ENCODE measurements at regions of chr19 and their contacts with region 1.

Region 1: DNA sequence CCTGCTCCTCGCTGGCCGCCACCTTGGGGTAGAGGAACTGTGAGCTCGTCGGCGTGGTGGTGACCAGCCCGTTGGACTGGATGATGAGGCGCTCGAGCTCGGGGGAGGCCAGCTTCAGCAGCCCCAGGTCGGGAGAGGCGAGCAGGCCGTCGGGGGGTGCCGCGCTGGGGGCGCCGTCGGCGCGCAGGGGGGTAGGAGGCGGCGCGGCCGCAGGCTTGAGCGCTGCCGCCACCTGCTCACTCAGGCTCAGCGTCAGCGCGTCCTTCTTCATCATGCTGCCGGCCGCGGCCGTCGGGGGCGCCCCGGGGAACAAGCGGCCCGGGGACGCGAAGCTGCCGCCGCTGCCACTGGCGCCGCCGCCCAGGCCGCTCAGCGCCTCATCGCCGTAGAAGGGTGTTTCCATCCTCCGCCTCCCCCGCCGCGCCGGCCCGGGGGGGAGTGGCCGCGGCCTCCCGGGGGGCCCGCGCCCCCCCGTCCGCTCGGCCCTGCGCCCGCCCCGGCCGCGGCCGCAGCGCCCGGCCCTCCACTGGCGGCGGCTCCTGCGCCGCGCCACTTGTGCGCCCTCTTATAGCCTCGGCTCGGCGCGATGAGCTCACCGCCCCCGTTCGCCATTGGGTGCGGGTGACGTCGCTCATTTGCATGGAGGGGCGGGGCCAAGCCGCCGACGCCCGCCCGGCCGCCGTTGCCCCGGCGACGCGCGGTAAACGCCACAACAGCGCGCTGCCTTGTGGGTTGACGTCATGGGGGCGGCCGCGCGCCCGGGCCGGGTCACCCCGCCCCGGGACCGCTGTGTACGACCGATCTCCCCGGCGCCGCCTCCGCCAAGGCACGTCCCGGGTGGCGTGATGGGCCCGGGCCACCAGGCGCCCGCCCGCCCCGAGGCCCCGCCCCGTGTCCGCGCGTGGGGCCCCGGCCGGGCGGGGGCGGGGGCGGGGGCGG is at the start of gene JUND:
- DNase-seq: peak; percentile 98 to 99
- ATAC-seq: peak; percentile 77 to 88 (median 82)
- H3K4me3 ChIP-seq: peak within 1 kb of the TSS; percentile 75 to 100 (median 94)
- H3K27ac ChIP-seq: peak within 1 kb of the TSS; percentile 99 to 100 (median 100)
- H3K4me1 ChIP-seq: peaks cover 9 to 56% (median 45%) of the 10 kb centered on the region in 9 donors
- H3K27me3 ChIP-seq: no peaks in the 10 kb centered on the region
- CTCF ChIP-seq: peak in 1 of 9 donors; percentile 9
- total RNA-seq, gene JUND: 93.7 to 195 (median 133) TPM

Region 2: GRCh38 chr19:17968362-17968761 is 313.0 kb before region 1 on chr19:
- intact Hi-C with region 1: no loop called
- DNase-seq: no peak
- ATAC-seq: no peak
- H3K4me3 ChIP-seq: no peak overlapping the region
- H3K27ac ChIP-seq: no peak overlapping the region
- H3K4me1 ChIP-seq: peaks cover 0 to 5% (median 0%) of the 10 kb centered on the region in 9 donors
- H3K27me3 ChIP-seq: peaks cover 0 to 73% (median 57%) of the 10 kb centered on the region in 7 donors
- CTCF ChIP-seq: no peak

Region 3: DNA sequence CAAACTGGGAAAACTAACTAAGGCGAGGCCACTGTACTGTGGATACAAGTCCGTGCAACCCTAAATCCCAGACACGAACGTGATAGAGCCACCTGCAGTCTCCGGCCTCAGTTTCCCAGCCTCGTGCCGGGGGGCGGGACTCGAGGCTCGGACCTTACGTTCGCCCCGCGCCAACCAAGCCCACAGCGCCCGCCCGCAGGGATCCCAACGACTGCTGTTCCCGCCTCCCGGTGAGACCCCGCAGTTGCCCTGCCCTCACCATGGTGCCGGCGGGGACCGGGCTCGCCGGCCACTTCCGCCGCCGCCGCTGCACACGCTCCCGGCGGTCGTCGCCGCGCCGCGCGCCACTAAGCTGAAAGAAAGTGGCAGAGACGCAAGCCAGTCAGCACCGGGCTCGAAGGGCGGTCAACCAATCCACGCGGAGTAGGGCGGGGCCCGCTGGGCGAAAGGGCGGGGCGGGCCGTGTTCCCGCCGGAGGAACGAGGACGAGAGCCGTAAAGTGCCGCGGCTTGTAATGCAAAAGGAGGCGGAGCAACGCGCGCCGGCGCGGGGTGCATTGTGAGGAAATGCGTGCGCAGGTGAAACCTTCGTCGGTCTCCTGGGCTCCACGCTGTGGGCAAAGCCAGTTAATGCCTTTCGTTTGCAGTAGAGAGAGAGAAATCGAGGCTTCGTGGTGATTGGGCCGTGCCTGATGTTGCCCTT is 41.6 kb after region 1 on chr19 and contains the start of gene LSM4:
- intact Hi-C with region 1: loop called (anchors 1 to 5 kb)
- DNase-seq: peak; percentile 98
- ATAC-seq: peak; percentile 96 to 98 (median 97)
- H3K4me3 ChIP-seq: peak within 1 kb of the TSS; percentile 58 to 92 (median 78)
- H3K27ac ChIP-seq: peak within 1 kb of the TSS; percentile 63 to 98 (median 92)
- H3K4me1 ChIP-seq: peaks cover 0 to 62% (median 57%) of the 10 kb centered on the region in 9 donors
- H3K27me3 ChIP-seq: no peaks in the 10 kb centered on the region
- CTCF ChIP-seq: peak in 4 of 9 donors; percentile 12 to 42 (median 28)
- total RNA-seq, gene LSM4: 73.2 to 114 (median 93.3) TPM

Region 4: DNA sequence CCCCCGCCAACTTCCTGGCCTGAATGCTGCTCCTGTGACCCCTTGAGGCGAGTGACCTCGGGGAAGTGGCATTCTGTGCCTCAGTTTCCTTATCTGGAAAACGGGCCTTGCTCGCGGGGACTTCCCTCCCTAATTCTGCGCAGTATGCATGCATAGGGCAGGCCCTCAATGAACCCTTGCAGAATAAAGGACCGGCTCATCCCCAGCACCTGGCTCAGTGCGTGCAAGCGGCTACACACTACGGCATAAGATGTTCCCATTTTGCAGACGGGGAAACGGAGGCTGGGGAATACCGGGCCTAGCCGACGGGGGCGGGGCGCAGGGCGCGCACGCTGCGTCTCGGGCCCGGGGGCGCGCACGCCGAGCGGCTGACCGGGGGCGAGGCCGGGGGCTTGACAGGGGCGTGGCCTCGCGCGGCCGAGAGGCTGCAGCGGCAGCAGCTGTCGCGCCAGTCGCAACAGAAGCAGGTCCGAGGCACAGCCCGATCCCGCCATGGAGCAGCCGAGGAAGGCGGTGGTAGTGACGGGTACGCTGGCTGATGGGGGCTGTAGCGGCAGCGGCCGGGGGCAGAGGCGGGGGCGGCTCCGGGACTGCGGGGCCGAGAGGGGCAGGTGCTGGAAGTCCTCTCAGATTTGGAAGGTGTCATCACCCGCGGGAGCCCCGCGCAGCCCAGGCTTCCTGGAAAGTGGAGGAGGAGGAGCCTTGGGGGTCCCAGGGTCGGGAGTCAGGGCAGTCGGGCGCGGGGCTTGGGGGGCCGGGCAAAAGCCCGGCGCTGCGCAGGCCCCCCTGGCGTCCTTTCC is 59.0 kb after region 1 on chr19 and contains the start of gene PGPEP1:
- intact Hi-C with region 1: loop called in 1 of 10 experiments (anchors 5 kb)
- DNase-seq: peak; percentile 82
- ATAC-seq: peak; percentile 77 to 90 (median 86)
- H3K4me3 ChIP-seq: peak within 1 kb of the TSS; percentile 63 to 97 (median 90)
- H3K27ac ChIP-seq: peak within 1 kb of the TSS; percentile 32 to 91 (median 85)
- H3K4me1 ChIP-seq: peaks cover 10 to 37% (median 21%) of the 10 kb centered on the region in 9 donors
- H3K27me3 ChIP-seq: no peaks in the 10 kb centered on the region
- CTCF ChIP-seq: no peak
- total RNA-seq, gene PGPEP1: 36.0 to 61.3 (median 46.8) TPM

Region 5: DNA sequence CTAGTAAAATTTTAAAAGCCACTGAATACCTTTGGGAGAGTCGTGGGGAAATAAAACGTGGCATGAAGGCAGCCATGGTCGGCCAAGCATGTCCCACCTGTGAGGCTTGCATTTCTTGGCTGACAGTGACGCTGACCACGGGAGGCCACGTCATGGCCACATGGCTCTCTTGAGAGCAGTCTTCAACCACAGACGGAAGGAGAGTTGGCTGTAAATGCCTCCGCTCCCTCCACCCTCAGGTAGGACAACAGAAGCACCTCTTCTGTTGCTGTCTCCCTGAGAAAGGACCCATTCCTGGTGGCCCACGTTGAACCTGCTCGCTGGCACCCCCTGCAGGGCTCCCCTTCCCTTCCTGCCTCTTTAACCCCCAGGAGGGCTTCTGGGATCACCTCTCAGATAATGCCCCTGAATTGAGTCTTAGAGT is 126.7 kb after region 1 on chr19:
- intact Hi-C with region 1: loop called in 4 of 10 experiments (anchors 5 to 10 kb)
- DNase-seq: peak; percentile 8 to 58
- ATAC-seq: peak in 2 of 8 donors; percentile 24 to 46
- H3K4me3 ChIP-seq: no peak overlapping the region
- H3K27ac ChIP-seq: no peak overlapping the region
- H3K4me1 ChIP-seq: peaks cover 0 to 9% (median 0%) of the 10 kb centered on the region in 9 donors
- H3K27me3 ChIP-seq: no peaks in the 10 kb centered on the region
- CTCF ChIP-seq: peak in 7 of 9 donors; percentile 29 to 61 (median 46)